ENCODE measurements at regions of chr5 and their contacts with region 1.

Region 1: GRCh38 chr5:172194985-172195774 is 1.2 kb downstream of the EFCAB9 start:
- DNase-seq: no peak
- ATAC-seq: no peak

Region 2: DNA sequence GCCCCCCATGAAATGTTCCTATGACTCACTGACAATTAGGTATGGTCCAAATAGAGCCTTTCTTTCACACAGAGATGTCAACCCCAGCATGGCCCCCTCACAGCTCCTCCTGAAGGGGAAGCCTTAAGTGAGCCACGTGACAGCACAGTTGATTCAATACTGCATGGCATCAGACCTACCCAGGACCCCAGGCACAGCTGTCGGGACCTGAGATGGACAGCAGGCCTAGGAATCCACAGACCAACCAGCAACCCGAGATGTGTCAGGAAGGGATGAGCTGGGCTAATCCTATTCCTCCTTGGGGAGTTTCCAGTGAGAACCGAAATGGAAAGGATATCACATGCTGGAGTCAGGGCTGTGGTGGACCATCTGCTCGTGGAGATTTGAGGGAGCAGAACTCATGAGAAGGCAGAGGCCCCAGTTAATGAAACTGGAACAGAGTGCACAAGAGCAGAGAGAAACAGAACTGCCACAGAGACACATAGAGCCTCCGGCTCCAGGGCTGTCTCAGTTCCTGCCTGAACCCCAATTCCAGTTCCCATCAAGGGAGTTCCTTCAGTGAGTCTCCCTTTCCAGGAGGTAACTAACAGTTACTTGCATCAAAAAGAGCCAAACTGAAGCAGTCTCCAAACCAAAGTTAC is 451.6 kb before region 1 on chr5:
- intact Hi-C with region 1: no loop called
- DNase-seq: no peak
- ATAC-seq: no peak

Region 3: DNA sequence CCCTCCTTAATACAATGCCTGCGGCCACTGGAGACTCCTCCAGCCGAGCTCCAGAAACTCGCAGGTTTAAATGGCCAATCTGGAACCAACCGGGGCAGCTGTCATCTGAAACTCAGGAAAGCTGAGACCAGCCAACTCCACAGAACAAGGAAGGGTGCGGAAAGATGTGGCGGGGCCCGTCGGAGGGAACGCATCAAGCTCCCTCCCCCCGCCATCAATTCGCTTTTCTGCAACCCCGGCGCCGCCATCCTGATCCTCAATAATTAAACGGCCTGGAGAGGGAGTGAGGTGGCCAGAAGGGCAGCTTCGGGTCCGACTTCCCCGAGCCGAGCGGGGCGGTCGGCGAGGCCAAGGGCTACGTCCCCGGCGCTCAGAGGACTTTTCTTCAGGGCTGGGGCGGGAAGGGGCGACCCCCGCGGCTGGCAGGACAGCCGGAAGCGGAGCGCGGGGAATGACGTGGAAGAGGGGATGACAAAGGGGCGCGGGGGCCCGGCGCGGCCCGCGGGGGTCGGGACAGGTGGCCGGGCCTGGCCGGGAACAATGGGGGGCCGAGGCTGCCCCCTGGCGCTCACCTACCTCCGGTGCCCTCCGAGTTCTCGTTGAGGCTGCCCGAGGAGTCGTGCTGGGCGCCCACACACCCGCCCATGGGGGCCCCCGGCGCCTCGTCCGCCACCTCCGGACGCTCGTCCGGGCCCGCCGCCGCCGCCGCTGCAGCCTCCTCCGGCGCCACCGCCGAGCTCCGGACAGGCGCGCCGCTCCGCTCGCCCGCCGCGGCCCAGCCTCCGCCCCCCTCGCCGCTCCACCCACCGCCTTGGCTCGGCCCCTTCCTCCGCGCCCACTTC is 88.1 kb after region 1 on chr5 and contains the start of gene UBTD2:
- intact Hi-C with region 1: loop called in 1 of 2 experiments (anchors 10 kb)
- DNase-seq: peak; percentile 78 to 88
- ATAC-seq: peak; percentile 87
- total RNA-seq, gene UBTD2: 20.9 to 25.1 TPM

Region 4: GRCh38 chr5:172347496-172348052 is 152.4 kb after region 1 on chr5:
- intact Hi-C with region 1: no loop called
- DNase-seq: no peak
- ATAC-seq: no peak

Region 5: DNA sequence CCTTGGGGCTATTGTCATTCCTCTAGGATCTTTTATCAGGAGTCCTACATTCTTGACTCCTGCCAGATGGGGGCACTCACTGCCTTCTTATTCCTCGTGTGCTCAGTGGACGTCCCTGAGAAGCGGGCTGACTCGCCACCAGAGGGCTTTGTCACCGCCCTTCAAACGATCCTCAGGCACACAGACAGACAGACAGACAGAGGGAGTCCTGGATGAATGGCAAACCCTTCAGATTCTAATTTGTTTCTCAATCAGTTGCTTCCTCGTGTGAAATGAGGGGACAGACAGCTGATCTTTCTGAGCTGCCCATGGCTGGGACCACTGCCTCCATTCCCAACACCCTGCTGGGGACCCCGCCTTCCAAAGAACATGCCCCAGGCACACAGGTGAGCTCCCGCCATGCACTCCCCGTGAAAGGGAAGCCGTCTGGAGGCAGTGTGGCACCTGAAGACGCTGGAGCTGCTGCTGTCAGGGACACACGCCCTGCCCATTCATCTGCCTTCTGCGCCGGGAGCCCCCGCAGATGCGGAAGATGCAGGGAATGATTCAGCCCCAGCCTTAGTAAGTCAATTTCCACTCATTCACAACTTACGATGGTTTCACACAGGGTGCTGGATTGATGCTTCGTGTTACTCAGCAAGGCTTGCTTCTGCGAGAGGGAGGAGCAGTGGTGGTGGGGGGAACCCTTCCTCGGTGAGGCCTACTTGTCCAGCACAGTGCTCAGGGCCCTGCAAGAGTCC is 284.0 kb after region 1 on chr5:
- intact Hi-C with region 1: no loop called
- DNase-seq: peak; percentile 83 to 87
- ATAC-seq: peak; percentile 99

Measured in left colon (tissue), 2 donors.